Naive thymus-derived CD4-positive, alpha-beta T cell (primary cell): ENCODE measurements at regions of chr4 and their contacts with region 1.

Region 1: DNA sequence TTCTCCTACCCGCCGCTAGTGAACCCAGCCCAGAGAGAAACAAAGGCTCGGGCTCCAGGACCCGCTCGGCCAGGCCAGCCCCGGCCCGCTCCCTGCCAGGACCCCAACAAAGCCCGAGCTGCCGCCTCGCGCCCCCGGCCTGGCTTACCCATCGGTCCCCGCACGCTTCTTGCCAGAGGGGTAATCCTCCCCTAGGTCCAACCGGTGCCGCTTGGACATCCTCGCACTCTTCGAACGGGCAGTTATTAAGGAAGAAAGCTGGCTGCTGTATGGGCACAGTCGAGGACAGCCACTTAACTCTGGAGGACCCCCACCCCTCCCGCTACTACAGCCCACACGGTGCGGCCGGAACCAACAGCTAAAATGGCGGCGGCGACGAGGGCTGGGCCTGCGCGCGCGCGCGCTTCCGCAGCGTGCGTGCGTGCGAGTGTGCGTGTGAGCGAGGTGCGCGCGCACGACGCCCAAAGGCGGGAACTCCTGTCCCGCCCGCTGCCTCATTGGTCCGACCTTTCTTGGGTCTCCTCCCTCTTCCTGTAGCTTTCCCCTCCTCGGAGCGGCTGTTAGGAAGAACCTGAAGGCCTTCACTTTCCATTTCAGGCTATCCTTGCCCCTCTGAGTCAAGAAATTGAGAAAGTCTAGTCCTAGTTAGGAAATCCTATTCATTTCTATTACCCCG is at the start of gene DHX15:
- DNase-seq: peak; percentile 87 to 93 (median 91)
- ATAC-seq: peak; percentile 98
- H3K4me3 ChIP-seq: peak within 1 kb of the TSS; percentile 94
- H3K4me3 Mint-ChIP-seq: peak within 1 kb of the TSS; percentile 89 to 100 (median 98)
- H3K27ac ChIP-seq: peak within 1 kb of the TSS; percentile 94
- H3K27ac Mint-ChIP-seq: peak within 1 kb of the TSS; percentile 88 to 99 (median 97)
- H3K4me1 ChIP-seq: peaks cover 24 to 32% of the 10 kb centered on the region in 2 donors
- H3K4me1 Mint-ChIP-seq: peaks cover 28 to 50% (median 39%) of the 10 kb centered on the region in 7 donors
- H3K27me3 ChIP-seq: no peaks in the 10 kb centered on the region
- H3K27me3 Mint-ChIP-seq: no peaks in the 10 kb centered on the region
- total RNA-seq, gene DHX15: 137 to 186 (median 139) TPM

Region 2: DNA sequence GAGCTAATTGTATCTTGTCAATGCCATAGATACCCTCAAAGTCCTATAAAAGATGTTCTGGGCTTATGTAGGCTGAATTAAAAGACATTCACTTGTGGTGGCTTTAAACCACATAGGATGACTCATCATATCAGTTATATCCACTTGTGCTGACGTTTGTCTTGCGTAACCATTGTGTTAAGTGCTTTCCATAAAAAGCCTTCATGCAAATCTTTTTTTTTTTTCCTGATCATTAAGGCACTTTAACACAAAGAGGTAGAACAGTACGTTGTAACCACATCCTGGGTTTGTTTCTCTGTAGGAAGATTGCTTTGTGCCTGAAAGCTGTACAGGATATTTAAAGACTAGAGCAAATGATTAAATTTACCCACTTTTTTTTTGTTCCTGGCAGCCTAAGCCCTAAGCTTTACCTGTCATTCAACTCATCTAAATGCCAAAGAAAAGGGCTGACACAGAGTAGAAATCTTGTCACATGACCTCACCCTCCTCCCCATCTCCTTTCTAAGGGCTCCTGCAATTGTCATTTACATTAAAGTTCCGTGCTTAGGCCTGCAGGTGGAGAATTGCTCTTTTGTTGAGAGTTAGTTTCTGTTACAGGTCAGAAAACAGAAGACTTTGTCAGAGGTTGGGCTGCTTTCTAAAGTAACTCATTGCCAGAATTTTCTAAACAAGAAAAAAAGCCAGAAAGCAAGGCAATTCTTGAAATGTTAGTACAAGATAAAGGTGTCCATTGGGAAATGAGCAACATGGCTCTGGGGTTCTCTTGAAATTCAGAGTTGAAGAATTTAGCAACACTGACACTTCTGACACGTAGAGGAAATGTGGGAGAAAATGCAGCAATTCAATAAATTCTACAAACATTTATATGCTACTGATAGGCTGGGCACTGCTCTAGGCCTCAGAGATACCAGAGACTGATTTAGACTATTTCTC is 1250.1 kb before region 1 on chr4:
- CTCF ChIA-PET with region 1: no interaction called
- POLR2A ChIA-PET with region 1: no interaction called
- intact Hi-C with region 1: loop called (anchors 2 to 10 kb)
- DNase-seq: peak in 8 of 9 donors; percentile 31 to 89 (median 86)
- ATAC-seq: peak; percentile 91
- H3K4me3 ChIP-seq: peak overlapping the region; percentile 21
- H3K4me3 Mint-ChIP-seq: peak overlapping the region; percentile 34 to 78 (median 58)
- H3K27ac ChIP-seq: peak overlapping the region; percentile 45
- H3K27ac Mint-ChIP-seq: peak overlapping the region; percentile 68 to 97 (median 89)
- H3K4me1 ChIP-seq: peaks cover 6 to 20% of the 10 kb centered on the region in 2 donors
- H3K4me1 Mint-ChIP-seq: peaks cover 20 to 49% (median 35%) of the 10 kb centered on the region in 7 donors
- H3K27me3 ChIP-seq: no peaks in the 10 kb centered on the region
- H3K27me3 Mint-ChIP-seq: no peaks in the 10 kb centered on the region

Region 3: GRCh38 chr4:24544208-24544988 is 39.9 kb before region 1 on chr4:
- CTCF ChIA-PET with region 1: no interaction called
- POLR2A ChIA-PET with region 1: interaction called, 4 read pairs
- intact Hi-C with region 1: loop called (anchors 5 kb)
- DNase-seq: no peak
- ATAC-seq: no peak
- H3K4me3 ChIP-seq: no peak overlapping the region
- H3K4me3 Mint-ChIP-seq: peak overlapping the region in 2 of 10 donors; percentile 30 to 47
- H3K27ac ChIP-seq: no peak overlapping the region
- H3K27ac Mint-ChIP-seq: peak overlapping the region in 3 of 9 donors; percentile 25 to 52 (median 31)
- H3K4me1 ChIP-seq: no peaks in the 10 kb centered on the region
- H3K4me1 Mint-ChIP-seq: peaks cover 9 to 58% (median 51%) of the 10 kb centered on the region in 7 donors
- H3K27me3 ChIP-seq: no peaks in the 10 kb centered on the region
- H3K27me3 Mint-ChIP-seq: no peaks in the 10 kb centered on the region

Region 4: GRCh38 chr4:24564481-24564880 is 19.8 kb before region 1 on chr4:
- CTCF ChIA-PET with region 1: no interaction called
- POLR2A ChIA-PET with region 1: no interaction called
- intact Hi-C with region 1: loop called in 1 of 2 experiments (anchors 2 kb)
- DNase-seq: no peak
- ATAC-seq: no peak
- H3K4me3 ChIP-seq: no peak overlapping the region
- H3K4me3 Mint-ChIP-seq: peak overlapping the region in 7 of 10 donors; percentile 1 to 54 (median 37)
- H3K27ac ChIP-seq: no peak overlapping the region
- H3K27ac Mint-ChIP-seq: peak overlapping the region in 6 of 9 donors; percentile 5 to 89 (median 45)
- H3K4me1 ChIP-seq: peaks cover 0 to 12% of the 10 kb centered on the region in 2 donors
- H3K4me1 Mint-ChIP-seq: peaks cover 48 to 96% (median 84%) of the 10 kb centered on the region in 7 donors
- H3K27me3 ChIP-seq: no peaks in the 10 kb centered on the region
- H3K27me3 Mint-ChIP-seq: no peaks in the 10 kb centered on the region

Region 5: GRCh38 chr4:25159884-25160713 is 575.8 kb after region 1 on chr4 and contains the start of gene SEPSECS:
- CTCF ChIA-PET with region 1: no interaction called
- POLR2A ChIA-PET with region 1: interaction called, 3 read pairs
- intact Hi-C with region 1: loop called (anchors 1 kb)
- DNase-seq: peak; percentile 82 to 96 (median 94)
- ATAC-seq: peak; percentile 89
- H3K4me3 ChIP-seq: peak within 1 kb of the TSS; percentile 75
- H3K4me3 Mint-ChIP-seq: peak within 1 kb of the TSS; percentile 87 to 97 (median 94)
- H3K27ac ChIP-seq: peak within 1 kb of the TSS; percentile 97
- H3K27ac Mint-ChIP-seq: peak within 1 kb of the TSS; percentile 93 to 98 (median 96)
- H3K4me1 ChIP-seq: peaks cover 4 to 14% of the 10 kb centered on the region in 2 donors
- H3K4me1 Mint-ChIP-seq: peaks cover 33 to 66% (median 52%) of the 10 kb centered on the region in 7 donors
- H3K27me3 ChIP-seq: no peaks in the 10 kb centered on the region
- H3K27me3 Mint-ChIP-seq: peaks cover 0 to 2% (median 0%) of the 10 kb centered on the region in 5 donors
- total RNA-seq, gene SEPSECS: 14.4 to 25.0 (median 17.2) TPM

Region 6: GRCh38 chr4:25312496-25313200 is 728.3 kb after region 1 on chr4 and contains the start of gene ZCCHC4:
- CTCF ChIA-PET with region 1: no interaction called
- POLR2A ChIA-PET with region 1: interaction called, 3 read pairs
- intact Hi-C with region 1: loop called in 1 of 2 experiments (anchors 1 kb)
- DNase-seq: peak; percentile 83 to 99 (median 92)
- ATAC-seq: peak; percentile 100
- H3K4me3 ChIP-seq: peak within 1 kb of the TSS; percentile 80
- H3K4me3 Mint-ChIP-seq: peak within 1 kb of the TSS; percentile 91 to 100 (median 98)
- H3K27ac ChIP-seq: peak within 1 kb of the TSS; percentile 71
- H3K27ac Mint-ChIP-seq: peak within 1 kb of the TSS; percentile 90 to 98 (median 95)
- H3K4me1 ChIP-seq: peaks cover 5 to 7% of the 10 kb centered on the region in 2 donors
- H3K4me1 Mint-ChIP-seq: peaks cover 11 to 34% (median 29%) of the 10 kb centered on the region in 7 donors
- H3K27me3 ChIP-seq: no peaks in the 10 kb centered on the region
- H3K27me3 Mint-ChIP-seq: peaks cover 0 to 10% (median 4%) of the 10 kb centered on the region in 5 donors
- total RNA-seq, gene ZCCHC4: 9.5 to 15.5 (median 13.6) TPM

Region 7: DNA sequence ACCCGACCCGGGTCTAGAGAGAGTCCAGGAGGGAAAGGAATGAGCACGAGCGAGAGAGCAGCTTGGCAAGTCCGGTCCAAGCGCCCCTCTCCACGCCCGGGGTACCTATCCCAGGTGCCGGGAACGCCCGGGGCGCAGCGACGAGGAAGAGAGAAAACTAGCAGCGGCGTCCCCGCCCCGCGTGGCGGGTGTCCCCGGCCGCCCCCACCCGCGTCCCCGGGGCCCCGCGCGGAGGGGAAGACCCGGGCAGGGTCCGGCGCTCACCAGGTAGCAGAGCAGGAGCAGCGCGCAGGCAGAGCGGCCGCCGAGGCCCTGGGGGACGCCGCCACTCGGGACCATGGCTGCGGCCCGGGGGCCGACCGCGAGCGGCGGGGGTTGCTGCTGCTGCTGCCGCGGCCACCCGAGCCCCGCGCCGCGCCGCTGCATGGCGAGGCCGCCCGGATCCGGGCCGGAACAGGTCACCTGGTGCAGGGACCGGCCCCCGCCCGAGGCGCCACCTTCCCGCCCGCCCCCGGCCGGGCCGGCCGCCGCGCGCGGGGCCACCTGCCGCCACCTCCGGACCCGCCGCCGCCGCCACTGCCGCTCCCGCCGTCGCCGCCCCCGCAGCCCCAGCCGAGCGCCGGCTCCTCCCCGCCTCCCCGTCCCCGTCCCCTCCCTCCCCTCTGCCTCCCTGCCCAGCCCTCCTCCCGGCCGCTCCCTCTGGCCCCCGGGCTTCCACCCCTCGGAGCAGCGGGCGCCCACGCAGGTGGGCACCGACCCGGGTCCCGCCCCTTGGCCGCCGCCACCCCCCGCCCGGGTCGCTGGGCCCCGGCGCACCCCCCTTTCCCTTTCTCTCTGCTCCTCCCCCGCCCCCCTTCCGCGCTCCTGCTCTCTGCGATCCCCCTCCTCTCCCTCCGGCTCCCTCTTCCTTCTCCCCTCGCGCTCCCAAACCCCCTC is 1278.4 kb after region 1 on chr4 and contains the start of gene SEL1L3:
- CTCF ChIA-PET with region 1: no interaction called
- POLR2A ChIA-PET with region 1: no interaction called
- intact Hi-C with region 1: loop called (anchors 5 to 10 kb)
- DNase-seq: peak in 8 of 9 donors; percentile 13 to 77 (median 29)
- ATAC-seq: peak; percentile 59
- H3K4me3 ChIP-seq: peak within 1 kb of the TSS; percentile 68
- H3K4me3 Mint-ChIP-seq: peak within 1 kb of the TSS; percentile 94 to 100 (median 98)
- H3K27ac ChIP-seq: peak within 1 kb of the TSS; percentile 71
- H3K27ac Mint-ChIP-seq: peak within 1 kb of the TSS; percentile 88 to 99 (median 96)
- H3K4me1 ChIP-seq: peaks cover 30 to 32% of the 10 kb centered on the region in 2 donors
- H3K4me1 Mint-ChIP-seq: peaks cover 32 to 44% (median 39%) of the 10 kb centered on the region in 7 donors
- H3K27me3 ChIP-seq: no peaks in the 10 kb centered on the region
- H3K27me3 Mint-ChIP-seq: peaks cover 0 to 3% (median 0%) of the 10 kb centered on the region in 5 donors
- total RNA-seq, gene SEL1L3: 38.1 to 55.8 (median 47.0) TPM